ENCODE measurements at regions of chr11 and their contacts with region 1.

Region 1: GRCh38 chr11:63986156-63986931 is at the start of gene OTUB1:
- DNase-seq: peak; percentile 97
- H3K4me3 Mint-ChIP-seq: peak within 1 kb of the TSS; percentile 99
- H3K27ac Mint-ChIP-seq: peak within 1 kb of the TSS; percentile 97
- H3K4me1 Mint-ChIP-seq: peaks cover 29% of the 10 kb centered on the region
- H3K27me3 Mint-ChIP-seq: no peaks in the 10 kb centered on the region
- total RNA-seq, gene OTUB1: 105 and 115 TPM in 2 replicates

Region 2: GRCh38 chr11:63938479-63939396 is 47.6 kb before region 1 on chr11 and contains the start of gene NAA40:
- intact Hi-C with region 1: loop called (anchors 2 kb)
- DNase-seq: peak; percentile 97
- H3K4me3 Mint-ChIP-seq: peak within 1 kb of the TSS; percentile 87
- H3K27ac Mint-ChIP-seq: peak within 1 kb of the TSS; percentile 80
- H3K4me1 Mint-ChIP-seq: peaks cover 17% of the 10 kb centered on the region
- H3K27me3 Mint-ChIP-seq: no peaks in the 10 kb centered on the region
- total RNA-seq, gene NAA40: 26.1 and 26.9 TPM in 2 replicates

Region 3: DNA sequence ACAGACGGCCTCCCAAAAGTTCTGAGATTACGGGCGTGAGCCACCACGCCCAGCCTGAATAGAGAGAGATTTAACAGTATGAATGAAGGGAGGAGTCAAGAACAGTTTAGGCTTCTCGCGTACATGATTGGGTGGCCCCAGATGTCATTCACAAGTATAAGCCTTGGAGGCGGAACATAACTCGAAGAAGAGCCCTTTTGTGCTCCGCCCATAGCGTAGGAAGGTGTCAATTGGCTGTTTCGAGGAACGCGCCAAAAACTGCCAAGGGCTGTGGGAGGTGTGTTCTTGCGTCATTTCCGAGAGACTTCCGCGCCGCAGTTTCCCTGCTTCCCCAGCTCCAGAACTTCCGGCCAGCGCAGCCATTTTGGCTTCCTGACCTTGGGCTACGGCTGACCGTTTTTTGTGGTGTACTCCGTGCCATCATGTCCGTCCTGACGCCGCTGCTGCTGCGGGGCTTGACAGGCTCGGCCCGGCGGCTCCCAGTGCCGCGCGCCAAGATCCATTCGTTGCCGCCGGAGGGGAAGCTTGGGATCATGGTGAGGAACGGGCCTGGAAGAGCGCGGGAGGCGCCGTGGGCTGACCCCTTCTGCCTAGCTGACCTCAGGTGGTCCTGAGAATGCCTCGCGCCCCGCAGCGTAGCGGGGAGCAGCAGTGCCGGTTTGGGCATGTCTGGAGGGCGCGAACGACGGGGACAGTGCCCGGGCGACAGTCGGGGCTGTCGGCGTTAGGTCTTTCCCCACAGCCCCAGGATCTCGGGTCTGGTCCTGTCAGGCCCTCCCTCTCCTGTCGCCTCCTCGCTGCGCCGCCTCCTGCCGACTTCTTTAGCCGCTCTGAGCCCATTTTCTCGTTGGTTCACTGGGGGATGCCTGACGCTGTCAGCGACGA is 11.8 kb before region 1 on chr11 and contains the start of gene COX8A:
- intact Hi-C with region 1: loop called (anchors 1 kb)
- DNase-seq: peak; percentile 99
- H3K4me3 Mint-ChIP-seq: peak within 1 kb of the TSS; percentile 100
- H3K27ac Mint-ChIP-seq: peak within 1 kb of the TSS; percentile 99
- H3K4me1 Mint-ChIP-seq: peaks cover 18% of the 10 kb centered on the region
- H3K27me3 Mint-ChIP-seq: peaks cover under 1% of the 10 kb centered on the region
- total RNA-seq, gene COX8A: 302 TPM in 2 replicates

Region 4: GRCh38 chr11:64036087-64037026 is 50.0 kb after region 1 on chr11:
- intact Hi-C with region 1: no loop called
- DNase-seq: no peak
- H3K4me3 Mint-ChIP-seq: no peak overlapping the region
- H3K27ac Mint-ChIP-seq: no peak overlapping the region
- H3K4me1 Mint-ChIP-seq: peaks cover 2% of the 10 kb centered on the region
- H3K27me3 Mint-ChIP-seq: peaks cover 31% of the 10 kb centered on the region

Measured in activated CD4-positive, alpha-beta T cell treated with anti-CD3 and anti-CD28 coated beads, Interleukin-2, amount 10 ng/mL, durations not matched to agents 24 days and 14 days (primary cell).